B cell (primary cell): ENCODE measurements at regions of chr9 and their contacts with region 1.

Region 1: DNA sequence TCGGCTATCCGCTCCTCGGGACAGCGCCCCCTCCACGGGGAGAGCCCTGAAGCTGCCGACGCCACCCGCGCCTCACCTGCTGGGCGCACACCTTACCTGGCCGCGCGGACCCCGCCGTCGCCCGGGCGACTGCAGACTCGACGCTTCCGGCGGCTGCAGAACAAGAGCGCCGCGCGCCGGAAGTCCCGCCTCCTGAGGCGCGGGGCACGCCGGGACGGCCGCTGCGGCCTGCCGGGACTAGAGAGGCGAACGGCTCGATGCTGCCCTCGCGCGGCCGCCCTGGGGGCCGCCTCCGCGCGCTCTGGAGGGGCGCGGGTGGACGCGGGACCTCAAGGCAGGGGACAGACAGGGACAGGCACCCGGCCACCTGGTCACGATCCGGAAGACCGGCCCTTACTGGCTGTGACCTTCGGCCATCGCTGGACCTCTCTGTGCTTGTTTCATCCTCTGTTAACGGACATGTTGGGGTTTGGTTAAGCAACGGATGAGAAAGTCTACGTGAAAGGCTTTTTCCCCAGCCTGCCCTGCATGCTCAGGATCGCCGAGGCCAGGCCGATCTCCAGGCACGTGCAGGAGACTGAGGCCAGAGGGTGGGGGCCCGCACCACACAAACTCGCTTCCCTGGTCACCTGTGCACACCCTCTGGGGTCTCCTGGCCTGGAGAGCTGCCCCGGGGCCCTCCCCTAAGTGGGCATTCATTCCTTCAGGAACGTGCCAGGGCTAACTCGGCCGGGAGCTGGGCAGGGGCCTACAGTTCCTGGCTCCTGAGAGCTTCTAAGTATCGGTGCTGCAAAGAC is at the start of gene SNAPC4:
- DNase-seq: peak; percentile 92
- ATAC-seq: peak; percentile 91
- H3K4me3 ChIP-seq: peak within 1 kb of the TSS; percentile 30 to 83 (median 76)
- H3K4me3 Mint-ChIP-seq: peak within 1 kb of the TSS; percentile 89
- H3K27ac ChIP-seq: peak within 1 kb of the TSS in 1 of 2 donors; percentile 54
- H3K27ac Mint-ChIP-seq: peak within 1 kb of the TSS; percentile 70
- H3K4me1 ChIP-seq: peaks cover 37 to 41% of the 10 kb centered on the region in 2 donors
- H3K4me1 Mint-ChIP-seq: peaks cover 42% of the 10 kb centered on the region
- H3K27me3 ChIP-seq: no peaks in the 10 kb centered on the region
- H3K27me3 Mint-ChIP-seq: no peaks in the 10 kb centered on the region
- CTCF ChIP-seq: peak; percentile 94
- total RNA-seq, gene SNAPC4: 15.4 and 15.6 TPM in 2 replicates

Region 2: DNA sequence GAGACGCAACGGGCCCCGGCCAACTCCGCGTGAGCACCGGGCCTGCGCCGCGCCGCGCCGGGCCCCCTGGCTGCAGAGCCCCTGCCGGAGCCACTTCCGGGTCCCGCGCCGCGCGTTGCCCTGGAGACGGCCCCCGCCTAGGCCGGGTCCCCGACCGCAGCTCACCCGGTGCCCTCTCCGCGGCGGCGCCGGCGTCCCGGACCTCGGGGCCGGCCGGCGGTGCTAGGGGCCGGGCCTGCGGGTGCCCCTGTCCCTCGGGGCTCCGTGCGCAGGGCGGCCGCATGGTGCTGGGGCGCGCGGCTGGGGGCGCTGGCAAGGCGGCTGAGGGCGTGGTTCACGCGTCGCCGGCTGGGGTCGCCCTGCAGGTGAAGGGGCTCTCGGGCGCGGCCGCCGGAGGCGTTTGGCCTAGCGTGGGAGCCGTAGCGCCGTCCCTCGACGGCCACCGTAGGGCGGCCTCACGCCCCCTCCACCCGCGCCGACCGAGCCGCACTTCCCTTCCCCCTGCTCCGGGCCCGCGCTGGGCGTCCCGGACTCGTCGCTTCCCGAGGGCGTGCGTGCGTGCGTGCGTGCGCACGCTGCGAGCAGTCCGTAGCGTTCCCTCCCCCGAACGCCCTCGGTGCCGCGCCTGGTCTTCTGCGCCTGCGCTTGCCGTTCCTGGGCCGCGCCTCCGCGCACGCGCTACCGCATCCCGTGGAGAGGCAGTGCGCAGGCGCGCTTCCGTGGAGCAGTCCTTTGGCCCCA is 281.7 kb before region 1 on chr9 and contains the start of gene TMEM250:
- CTCF ChIA-PET with region 1: no interaction called
- POLR2A ChIA-PET with region 1: no interaction called
- intact Hi-C with region 1: no loop called
- DNase-seq: peak; percentile 99
- ATAC-seq: peak; percentile 87
- H3K4me3 ChIP-seq: peak within 1 kb of the TSS; percentile 32 to 76 (median 64)
- H3K4me3 Mint-ChIP-seq: peak within 1 kb of the TSS; percentile 87
- H3K27ac ChIP-seq: peak within 1 kb of the TSS; percentile 51 to 94
- H3K27ac Mint-ChIP-seq: peak within 1 kb of the TSS; percentile 94
- H3K4me1 ChIP-seq: peaks cover 15 to 29% of the 10 kb centered on the region in 2 donors
- H3K4me1 Mint-ChIP-seq: peaks cover 14% of the 10 kb centered on the region
- H3K27me3 ChIP-seq: no peaks in the 10 kb centered on the region
- H3K27me3 Mint-ChIP-seq: no peaks in the 10 kb centered on the region
- CTCF ChIP-seq: no peak
- total RNA-seq, gene TMEM250: 29.6 and 30.4 TPM in 2 replicates

Region 3: GRCh38 chr9:136170006-136170901 is 230.0 kb before region 1 on chr9:
- CTCF ChIA-PET with region 1: interaction called, 5 read pairs
- POLR2A ChIA-PET with region 1: no interaction called
- intact Hi-C with region 1: loop called (anchors 1 kb)
- DNase-seq: peak; percentile 80
- ATAC-seq: peak; percentile 97
- H3K4me3 ChIP-seq: no peak overlapping the region
- H3K4me3 Mint-ChIP-seq: no peak overlapping the region
- H3K27ac ChIP-seq: no peak overlapping the region
- H3K27ac Mint-ChIP-seq: peak overlapping the region; percentile 68
- H3K4me1 ChIP-seq: peaks cover 0 to 15% of the 10 kb centered on the region in 2 donors
- H3K4me1 Mint-ChIP-seq: peaks cover 11% of the 10 kb centered on the region
- H3K27me3 ChIP-seq: peaks cover 0 to 35% (median 4%) of the 10 kb centered on the region in 4 experiments
- H3K27me3 Mint-ChIP-seq: peaks cover 21% of the 10 kb centered on the region
- CTCF ChIP-seq: peak; percentile 85

Region 4: DNA sequence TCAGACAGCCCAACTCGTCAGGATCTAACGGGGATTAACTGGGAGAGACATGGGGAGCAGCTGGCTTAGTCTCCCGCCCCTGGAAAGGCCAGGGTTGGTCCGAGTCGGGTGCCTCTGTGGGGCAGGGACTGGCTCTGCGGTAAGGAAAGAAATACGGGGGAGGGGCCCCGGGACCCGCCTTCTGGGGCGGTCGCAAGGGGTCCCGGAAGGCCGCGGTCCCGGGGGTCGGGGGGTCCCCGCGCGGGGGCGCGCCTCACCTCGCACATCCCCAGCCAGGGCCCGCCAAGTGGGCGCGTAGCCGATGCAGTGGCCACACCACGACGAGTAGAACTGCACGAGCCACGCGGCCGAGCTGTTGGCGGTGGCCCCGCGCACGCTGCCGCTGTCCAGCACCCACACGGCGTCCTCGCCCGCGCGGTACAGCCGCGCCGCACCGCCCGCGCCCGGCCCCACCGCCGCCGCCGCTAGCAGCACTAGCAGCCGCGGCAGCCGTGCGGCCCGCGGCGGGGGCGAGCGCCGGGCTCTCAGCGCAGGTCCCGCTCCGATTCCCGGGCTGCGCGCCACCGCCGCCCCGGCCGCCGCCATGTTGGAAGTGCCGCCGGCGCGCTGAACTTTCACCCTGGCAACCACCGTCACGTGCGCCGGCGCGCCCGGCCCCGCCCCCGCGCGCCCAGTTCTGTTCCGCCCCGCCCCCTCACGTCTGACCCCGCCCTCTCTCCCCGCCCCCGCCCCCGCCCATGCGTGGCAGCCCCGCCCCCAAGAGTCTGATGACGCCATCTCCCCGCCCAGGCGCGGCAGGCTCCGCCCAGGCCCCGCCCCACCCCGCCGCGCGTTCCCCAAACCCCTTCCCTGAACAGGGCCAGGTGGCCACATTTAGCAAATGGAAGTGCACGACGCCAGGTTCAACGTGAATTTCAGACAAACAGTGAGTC is 154.8 kb before region 1 on chr9 and contains the start of gene QSOX2:
- CTCF ChIA-PET with region 1: no interaction called
- POLR2A ChIA-PET with region 1: no interaction called
- intact Hi-C with region 1: loop called (anchors 5 kb)
- DNase-seq: peak; percentile 91
- ATAC-seq: peak; percentile 71
- H3K4me3 ChIP-seq: peak within 1 kb of the TSS; percentile 66 to 97 (median 90)
- H3K4me3 Mint-ChIP-seq: peak within 1 kb of the TSS; percentile 94
- H3K27ac ChIP-seq: peak within 1 kb of the TSS; percentile 70 to 83
- H3K27ac Mint-ChIP-seq: peak within 1 kb of the TSS; percentile 90
- H3K4me1 ChIP-seq: peaks cover 46 to 51% of the 10 kb centered on the region in 2 donors
- H3K4me1 Mint-ChIP-seq: peaks cover 50% of the 10 kb centered on the region
- H3K27me3 ChIP-seq: no peaks in the 10 kb centered on the region
- H3K27me3 Mint-ChIP-seq: no peaks in the 10 kb centered on the region
- CTCF ChIP-seq: no peak
- total RNA-seq, gene QSOX2: 139 and 141 TPM in 2 replicates

Region 5: DNA sequence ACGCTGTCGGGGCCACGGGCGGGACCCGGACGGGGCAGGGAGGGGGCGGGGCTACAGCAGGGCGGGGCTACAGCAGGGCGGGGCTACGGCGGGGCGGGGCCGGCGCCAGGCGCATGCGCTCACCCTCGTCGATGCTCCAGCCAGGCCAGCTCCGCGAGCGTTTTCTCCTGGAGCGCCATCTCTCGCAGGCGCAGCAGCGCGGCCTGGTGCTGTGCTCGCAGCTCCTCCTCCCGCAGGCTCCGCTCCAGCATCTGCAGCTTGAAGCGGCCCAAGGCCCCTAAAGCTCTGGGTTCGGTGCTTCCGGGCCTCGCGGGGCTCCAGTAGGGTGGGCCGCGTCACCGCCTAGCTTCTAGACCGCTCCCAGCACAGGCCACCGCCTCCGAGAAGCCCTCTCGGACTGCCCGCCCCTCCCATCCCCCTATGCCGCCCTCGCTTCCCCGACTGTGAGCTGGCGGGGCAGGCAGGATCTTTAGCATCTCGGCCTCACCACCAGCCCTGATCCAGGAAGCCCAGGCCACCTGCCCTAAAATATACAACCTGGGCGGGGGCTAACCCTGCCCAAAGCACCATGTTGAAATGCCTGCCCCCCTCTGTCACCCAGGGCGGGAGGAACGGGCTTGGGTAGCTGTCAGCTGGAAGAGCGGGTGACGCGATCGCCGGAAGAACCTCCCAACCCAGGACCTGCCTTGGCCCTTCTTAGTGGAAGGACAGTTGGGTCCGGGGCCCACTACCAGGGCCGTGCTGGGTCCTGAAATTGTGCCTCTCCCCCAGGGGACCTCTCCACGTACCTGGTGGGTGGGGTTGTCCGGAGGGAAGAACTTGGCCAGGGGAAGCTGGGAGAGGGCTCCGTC is 132.8 kb before region 1 on chr9:
- CTCF ChIA-PET with region 1: interaction called, 4 read pairs
- POLR2A ChIA-PET with region 1: no interaction called
- intact Hi-C with region 1: loop called (anchors 1 kb)
- DNase-seq: peak; percentile 90
- ATAC-seq: peak; percentile 98
- H3K4me3 ChIP-seq: peak overlapping the region in 4 of 5 experiments; percentile 55 to 69 (median 62)
- H3K4me3 Mint-ChIP-seq: peak overlapping the region; percentile 85
- H3K27ac ChIP-seq: peak overlapping the region; percentile 50 to 66
- H3K27ac Mint-ChIP-seq: peak overlapping the region; percentile 84
- H3K4me1 ChIP-seq: peaks cover 7 to 16% of the 10 kb centered on the region in 2 donors
- H3K4me1 Mint-ChIP-seq: peaks cover 11% of the 10 kb centered on the region
- H3K27me3 ChIP-seq: no peaks in the 10 kb centered on the region
- H3K27me3 Mint-ChIP-seq: peaks cover 3% of the 10 kb centered on the region
- CTCF ChIP-seq: peak; percentile 38

Region 6: DNA sequence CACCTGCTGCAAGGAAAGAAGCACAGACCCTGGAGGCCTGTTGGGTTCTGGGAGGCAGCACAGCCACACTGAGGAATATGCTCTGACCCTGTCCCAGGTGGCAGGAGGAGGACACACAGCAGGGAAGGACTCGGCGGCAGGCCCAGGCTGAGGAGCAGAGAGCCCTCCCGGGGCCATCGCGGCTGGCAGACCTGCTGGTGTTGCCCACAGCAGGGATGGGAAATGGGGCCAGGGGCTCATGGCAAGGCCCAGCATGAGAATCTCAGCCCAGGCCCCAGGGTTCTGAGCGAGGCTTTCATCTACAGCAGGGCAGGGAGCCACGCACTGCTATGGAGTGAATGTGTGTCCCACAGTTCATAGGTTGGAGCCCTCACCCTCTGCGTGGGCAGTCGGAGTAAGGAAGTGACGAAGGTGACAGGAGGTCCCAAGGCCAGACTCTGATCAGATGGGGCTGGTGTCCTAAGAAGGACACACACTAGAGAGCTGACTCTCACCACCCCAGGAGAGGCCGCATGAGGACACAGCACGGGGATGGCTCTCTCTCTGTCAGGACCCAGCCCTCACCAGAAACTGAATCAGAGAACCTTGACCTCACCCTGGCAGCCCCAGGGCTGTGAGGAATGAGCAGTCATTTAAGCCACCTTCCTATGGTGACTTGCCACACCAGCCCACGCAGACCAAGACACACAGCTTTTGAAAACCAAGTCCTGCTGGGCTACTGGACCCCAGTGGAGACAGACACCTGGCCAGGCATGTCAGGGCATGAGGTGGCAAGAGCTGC is 83.2 kb before region 1 on chr9:
- CTCF ChIA-PET with region 1: no interaction called
- POLR2A ChIA-PET with region 1: no interaction called
- intact Hi-C with region 1: no loop called
- DNase-seq: no peak
- ATAC-seq: no peak
- H3K4me3 ChIP-seq: no peak overlapping the region
- H3K4me3 Mint-ChIP-seq: no peak overlapping the region
- H3K27ac ChIP-seq: no peak overlapping the region
- H3K27ac Mint-ChIP-seq: no peak overlapping the region
- H3K4me1 ChIP-seq: peaks cover 15 to 22% of the 10 kb centered on the region in 2 donors
- H3K4me1 Mint-ChIP-seq: peaks cover 16% of the 10 kb centered on the region
- H3K27me3 ChIP-seq: peaks cover 0 to 6% (median 0%) of the 10 kb centered on the region in 4 experiments
- H3K27me3 Mint-ChIP-seq: peaks cover 12% of the 10 kb centered on the region
- CTCF ChIP-seq: no peak

Region 7: GRCh38 chr9:136410500-136411287 is 10.5 kb after region 1 on chr9 and contains the starts of genes ENTR1 and PMPCA:
- CTCF ChIA-PET with region 1: interaction called, 16 read pairs
- POLR2A ChIA-PET with region 1: interaction called, 5 read pairs
- intact Hi-C with region 1: loop called (anchors 1 kb)
- DNase-seq: peak; percentile 95
- ATAC-seq: peak; percentile 88
- H3K4me3 ChIP-seq: peak within 1 kb of the TSS; percentile 46 to 96 (median 81)
- H3K4me3 Mint-ChIP-seq: peak within 1 kb of the TSS; percentile 92
- H3K27ac ChIP-seq: peak within 1 kb of the TSS; percentile 80 to 91
- H3K27ac Mint-ChIP-seq: peak within 1 kb of the TSS; percentile 92
- H3K4me1 ChIP-seq: peaks cover 25 to 34% of the 10 kb centered on the region in 2 donors
- H3K4me1 Mint-ChIP-seq: peaks cover 37% of the 10 kb centered on the region
- H3K27me3 ChIP-seq: no peaks in the 10 kb centered on the region
- H3K27me3 Mint-ChIP-seq: no peaks in the 10 kb centered on the region
- CTCF ChIP-seq: no peak
- total RNA-seq, gene ENTR1: 86.3 and 94.7 TPM in 2 replicates
- total RNA-seq, gene PMPCA: 64.6 and 72.2 TPM in 2 replicates

Region 8: GRCh38 chr9:136439550-136440408 is 39.5 kb after region 1 on chr9 and contains the start of gene INPP5E:
- CTCF ChIA-PET with region 1: interaction called, 4 read pairs
- POLR2A ChIA-PET with region 1: interaction called, 5 read pairs
- intact Hi-C with region 1: loop called (anchors 1 kb)
- DNase-seq: peak; percentile 90
- ATAC-seq: peak; percentile 87
- H3K4me3 ChIP-seq: peak within 1 kb of the TSS; percentile 31 to 79 (median 70)
- H3K4me3 Mint-ChIP-seq: peak within 1 kb of the TSS; percentile 84
- H3K27ac ChIP-seq: peak within 1 kb of the TSS in 1 of 2 donors; percentile 55
- H3K27ac Mint-ChIP-seq: peak within 1 kb of the TSS; percentile 77
- H3K4me1 ChIP-seq: peaks cover 21 to 28% of the 10 kb centered on the region in 2 donors
- H3K4me1 Mint-ChIP-seq: peaks cover 26% of the 10 kb centered on the region
- H3K27me3 ChIP-seq: no peaks in the 10 kb centered on the region
- H3K27me3 Mint-ChIP-seq: no peaks in the 10 kb centered on the region
- CTCF ChIP-seq: peak; percentile 81
- total RNA-seq, gene INPP5E: 33.1 and 35.3 TPM in 2 replicates